Activated CD4-positive, alpha-beta memory T cell treated with anti-CD3 and anti-CD28 coated beads, Interleukin-2, amount 10 ng/mL, durations not matched to agents 7 days and 5 days (primary cell): ENCODE measurements at regions of chr6 and their contacts with region 1.

Region 1: DNA sequence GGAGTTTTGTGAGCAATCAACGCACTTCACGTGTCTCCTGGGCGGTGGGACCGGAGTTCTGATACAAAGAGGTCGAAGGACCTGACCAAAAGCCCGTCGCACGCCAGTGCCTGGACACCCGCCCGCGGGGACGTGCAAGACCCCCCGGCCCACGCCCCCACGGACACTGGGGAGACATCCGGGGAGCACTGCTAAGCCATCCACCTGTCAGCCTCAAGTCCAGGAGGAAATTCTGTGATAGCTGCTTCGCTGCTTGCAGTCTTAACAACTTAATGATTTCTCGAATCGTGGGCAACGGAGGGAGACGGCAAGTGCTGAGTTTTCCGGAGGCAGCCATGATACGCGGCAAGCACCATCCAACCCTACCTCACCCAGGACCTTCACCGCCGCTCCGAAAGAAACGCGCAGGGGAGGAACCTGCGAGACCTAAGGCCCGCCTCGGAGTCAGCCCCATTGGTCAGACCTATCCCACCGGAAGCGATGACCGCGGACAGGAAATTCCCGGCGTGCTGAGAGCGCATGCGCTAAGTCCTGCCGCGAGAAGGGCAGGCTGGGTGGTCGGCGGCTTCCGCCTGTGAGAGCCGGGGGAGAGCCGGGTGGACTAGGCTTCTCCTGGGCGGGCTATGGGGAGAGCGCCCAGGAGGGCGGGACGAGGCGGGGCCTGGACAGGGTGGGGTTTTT is at the start of gene TFB1M:
- DNase-seq: peak; percentile 99
- H3K4me3 Mint-ChIP-seq: peak within 1 kb of the TSS; percentile 85
- H3K27ac Mint-ChIP-seq: peak within 1 kb of the TSS; percentile 92
- H3K4me1 Mint-ChIP-seq: peaks cover 42% of the 10 kb centered on the region
- H3K27me3 Mint-ChIP-seq: no peaks in the 10 kb centered on the region
- total RNA-seq, gene TFB1M: 24.6 to 28.1 TPM

Region 2: DNA sequence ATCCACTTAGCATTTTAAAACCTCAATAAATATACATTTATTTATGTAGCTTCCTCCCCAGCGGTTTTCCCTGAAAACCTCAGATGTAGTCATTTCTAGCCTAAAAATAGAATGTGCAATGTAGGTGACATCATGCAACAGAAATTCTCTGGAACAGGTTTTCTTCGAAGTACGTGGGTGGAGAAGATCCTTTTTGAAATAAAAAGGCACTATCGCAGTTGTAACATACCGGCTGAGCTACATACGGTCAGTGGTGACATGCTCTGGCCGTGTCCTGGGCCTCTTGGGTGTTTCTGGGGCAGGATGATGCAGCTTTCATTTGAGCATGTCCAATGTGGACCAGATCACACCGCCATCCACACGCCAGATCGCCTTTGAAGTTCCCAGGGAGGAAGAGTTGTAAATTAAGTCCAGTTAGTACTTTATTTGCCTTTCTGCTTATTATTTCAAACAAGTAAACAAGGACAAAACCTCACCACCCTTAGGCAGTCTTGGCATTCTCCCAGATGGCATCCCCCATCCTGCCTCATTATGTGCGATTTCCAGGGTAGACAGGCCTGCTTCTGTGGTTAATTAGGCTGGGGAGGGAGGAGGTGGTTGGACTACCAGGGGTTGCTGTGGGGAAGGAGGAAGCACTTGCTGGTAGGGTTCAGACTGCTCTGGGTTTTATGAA is 159.9 kb before region 1 on chr6:
- CTCF ChIA-PET with region 1: interaction called, 7 read pairs
- POLR2A ChIA-PET with region 1: interaction called, 15 read pairs
- DNase-seq: peak; percentile 54
- H3K4me3 Mint-ChIP-seq: peak overlapping the region; percentile 62
- H3K27ac Mint-ChIP-seq: peak overlapping the region; percentile 91
- H3K4me1 Mint-ChIP-seq: peaks cover 82% of the 10 kb centered on the region
- H3K27me3 Mint-ChIP-seq: no peaks in the 10 kb centered on the region

Region 3: GRCh38 chr6:155223646-155224451 is 90.4 kb before region 1 on chr6:
- CTCF ChIA-PET with region 1: no interaction called
- POLR2A ChIA-PET with region 1: no interaction called
- DNase-seq: peak; percentile 70
- H3K4me3 Mint-ChIP-seq: peak overlapping the region; percentile 53
- H3K27ac Mint-ChIP-seq: peak overlapping the region; percentile 85
- H3K4me1 Mint-ChIP-seq: peaks cover 22% of the 10 kb centered on the region
- H3K27me3 Mint-ChIP-seq: no peaks in the 10 kb centered on the region

Region 4: DNA sequence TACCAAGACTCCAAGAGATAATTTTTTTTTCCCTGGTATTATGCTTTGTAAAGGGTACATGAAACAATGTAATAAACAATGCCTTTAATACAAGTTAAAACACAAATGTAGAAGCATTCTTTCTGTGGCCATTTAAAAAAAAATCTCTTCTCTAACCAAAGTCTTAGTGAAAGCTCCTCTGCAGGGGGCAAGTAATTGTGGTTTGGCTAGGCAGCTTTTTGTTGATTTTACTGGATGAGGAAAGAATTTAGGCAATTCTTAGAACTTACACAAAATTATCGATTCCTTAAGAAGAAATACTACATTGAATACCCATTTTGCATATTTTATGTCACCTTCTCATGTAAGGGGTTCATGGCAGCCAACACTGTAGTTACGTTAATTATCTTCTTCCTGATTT is 12.4 kb before region 1 on chr6:
- CTCF ChIA-PET with region 1: interaction called, 4 read pairs
- POLR2A ChIA-PET with region 1: interaction called, 13 read pairs
- DNase-seq: no peak
- H3K4me3 Mint-ChIP-seq: no peak overlapping the region
- H3K27ac Mint-ChIP-seq: no peak overlapping the region
- H3K4me1 Mint-ChIP-seq: peaks cover 4% of the 10 kb centered on the region
- H3K27me3 Mint-ChIP-seq: no peaks in the 10 kb centered on the region

Region 5: DNA sequence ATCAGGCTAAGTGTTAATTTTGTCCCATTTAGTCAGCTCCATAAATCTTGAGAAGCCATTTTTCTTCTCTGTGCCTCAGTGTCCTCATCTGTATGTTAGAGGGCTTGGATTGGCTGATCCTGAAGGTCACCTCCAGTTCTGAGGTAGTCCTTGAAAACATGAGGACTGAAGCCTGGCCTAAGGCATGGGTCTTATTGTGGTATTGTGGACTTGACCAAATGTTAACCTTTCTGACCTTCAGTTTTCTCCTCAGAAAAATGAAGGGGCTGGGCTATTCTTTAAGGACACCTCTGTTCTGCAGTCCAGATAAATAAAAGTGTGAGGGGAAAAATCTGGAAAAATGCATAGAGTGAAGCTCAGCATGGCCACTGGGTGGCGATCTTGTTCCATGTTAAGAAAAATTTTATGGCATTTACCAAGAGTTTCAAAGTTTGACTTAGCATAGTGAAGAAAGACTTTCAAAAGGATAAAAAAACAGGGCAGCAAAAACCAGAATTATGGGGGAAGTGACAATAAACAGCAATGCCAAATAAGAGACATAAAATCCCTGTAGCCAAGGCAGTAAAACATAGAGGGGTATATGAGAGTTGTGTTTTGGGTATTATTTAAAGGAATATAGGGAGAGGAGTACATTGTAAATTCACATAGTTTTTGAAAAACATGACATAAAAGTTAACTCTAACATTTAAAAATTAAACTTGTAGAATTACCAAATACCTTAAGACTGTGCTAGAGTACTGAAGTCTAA is 13.3 kb after region 1 on chr6:
- CTCF ChIA-PET with region 1: interaction called, 13 read pairs
- POLR2A ChIA-PET with region 1: interaction called, 4 read pairs
- DNase-seq: peak; percentile 51
- H3K4me3 Mint-ChIP-seq: no peak overlapping the region
- H3K27ac Mint-ChIP-seq: no peak overlapping the region
- H3K4me1 Mint-ChIP-seq: peaks cover 3% of the 10 kb centered on the region
- H3K27me3 Mint-ChIP-seq: no peaks in the 10 kb centered on the region

Region 6: GRCh38 chr6:155418017-155418761 is 104.0 kb after region 1 on chr6:
- CTCF ChIA-PET with region 1: interaction called, 3 read pairs
- POLR2A ChIA-PET with region 1: interaction called, 14 read pairs
- DNase-seq: peak; percentile 64
- H3K4me3 Mint-ChIP-seq: peak overlapping the region; percentile 65
- H3K27ac Mint-ChIP-seq: peak overlapping the region; percentile 92
- H3K4me1 Mint-ChIP-seq: peaks cover 38% of the 10 kb centered on the region
- H3K27me3 Mint-ChIP-seq: no peaks in the 10 kb centered on the region

Region 7: DNA sequence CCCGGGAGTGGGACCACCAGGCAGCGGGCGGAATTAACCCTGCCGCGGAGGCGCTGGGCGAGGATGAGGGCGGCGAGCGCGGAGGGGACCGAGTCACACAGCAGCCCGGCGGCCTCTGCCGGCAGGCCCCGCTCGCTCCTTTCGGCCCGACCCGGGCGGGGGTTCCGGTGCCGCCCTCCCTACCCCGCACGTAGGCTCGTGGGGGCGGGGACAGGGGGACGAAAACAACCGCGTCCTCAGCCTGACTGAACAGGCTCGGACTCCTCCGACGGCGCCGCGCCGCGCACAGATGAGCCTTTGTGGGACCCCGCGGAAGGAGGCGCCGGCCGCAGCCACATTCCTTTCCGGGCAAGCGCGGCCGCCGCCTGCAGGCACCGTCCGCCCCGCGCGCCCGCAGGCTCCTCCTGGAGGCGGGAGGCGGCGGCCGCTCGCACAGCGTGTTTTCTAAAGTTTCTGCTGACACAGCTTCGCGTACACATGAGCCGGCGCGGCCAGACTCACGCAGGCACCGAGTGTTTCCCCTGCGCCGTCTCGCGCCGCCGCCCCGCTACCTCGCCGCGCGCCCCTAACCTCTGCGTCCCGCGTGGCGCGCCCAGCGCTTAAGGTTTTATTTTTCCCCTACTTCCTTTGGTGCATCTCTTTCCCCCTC is 1707.2 kb after region 1 on chr6:
- CTCF ChIA-PET with region 1: no interaction called
- POLR2A ChIA-PET with region 1: interaction called, 13 read pairs
- DNase-seq: peak; percentile 93
- H3K4me3 Mint-ChIP-seq: peak overlapping the region; percentile 90
- H3K27ac Mint-ChIP-seq: peak overlapping the region; percentile 100
- H3K4me1 Mint-ChIP-seq: peaks cover 52% of the 10 kb centered on the region
- H3K27me3 Mint-ChIP-seq: no peaks in the 10 kb centered on the region